ENCODE measurements at regions of chr10 and their contacts with region 1.

Region 1: GRCh38 chr10:119872860-119873681 is 428 bp upstream of the MCMBP start:
- DNase-seq: peak; percentile 17 to 91 (median 50)
- ATAC-seq: peak; percentile 95
- H3K4me3 ChIP-seq: peak overlapping the region; percentile 77
- H3K27ac ChIP-seq: peak overlapping the region; percentile 64
- H3K4me1 ChIP-seq: peaks cover 10% of the 10 kb centered on the region in 2 experiments; a peak in 4 of 5 replicates
- H3K27me3 ChIP-seq: no peaks in the 10 kb centered on the region
- CTCF ChIP-seq: 0 out of 6 replicates have a peak, but pooled peaks of 1 of the 3 experiments have one; percentile 2
- EP300 ChIP-seq: no peak
- POLR2A ChIP-seq: peak; percentile 70
- RAD21 ChIP-seq: no peak

Region 2: GRCh38 chr10:119892188-119893065 is 19.4 kb after region 1 on chr10 and contains the start of gene SEC23IP:
- CTCF ChIA-PET with region 1: no interaction called
- POLR2A ChIA-PET with region 1: interaction called, 9 read pairs
- in situ Hi-C with region 1: no loop called
- intact Hi-C with region 1: loop called (anchors 2 kb)
- DNase-seq: peak; percentile 78 to 96 (median 86)
- ATAC-seq: peak; percentile 99
- H3K4me3 ChIP-seq: peak within 1 kb of the TSS; percentile 67
- H3K27ac ChIP-seq: peak within 1 kb of the TSS; percentile 73
- H3K4me1 ChIP-seq: peaks cover 0 to 16% of the 10 kb centered on the region in 2 experiments; a peak in 3 of 5 replicates
- H3K27me3 ChIP-seq: no peaks in the 10 kb centered on the region
- CTCF ChIP-seq: no peak
- EP300 ChIP-seq: no peak
- POLR2A ChIP-seq: peak; percentile 85
- RAD21 ChIP-seq: no peak
- polyA plus RNA-seq, gene SEC23IP: 15.8 to 24.6 TPM